ENCODE measurements at regions of chr3 and their contacts with region 1.

Region 1: GRCh38 chr3:39288300-39288808 is 8.5 kb upstream of the CX3CR1 start:
- DNase-seq: peak; percentile 78
- ATAC-seq: peak; percentile 96
- H3K4me3 ChIP-seq: no peak overlapping the region
- H3K27ac ChIP-seq: no peak overlapping the region
- H3K4me1 ChIP-seq: peaks cover 0 to 7% of the 10 kb centered on the region in 2 experiments; a peak in 1 of 4 replicates
- H3K27me3 ChIP-seq: no peaks in the 10 kb centered on the region
- CTCF ChIP-seq: peak; percentile 94 to 99 (median 96)
- POLR2A ChIP-seq: no peak
- RAD21 ChIP-seq: peak; percentile 100

Region 2: DNA sequence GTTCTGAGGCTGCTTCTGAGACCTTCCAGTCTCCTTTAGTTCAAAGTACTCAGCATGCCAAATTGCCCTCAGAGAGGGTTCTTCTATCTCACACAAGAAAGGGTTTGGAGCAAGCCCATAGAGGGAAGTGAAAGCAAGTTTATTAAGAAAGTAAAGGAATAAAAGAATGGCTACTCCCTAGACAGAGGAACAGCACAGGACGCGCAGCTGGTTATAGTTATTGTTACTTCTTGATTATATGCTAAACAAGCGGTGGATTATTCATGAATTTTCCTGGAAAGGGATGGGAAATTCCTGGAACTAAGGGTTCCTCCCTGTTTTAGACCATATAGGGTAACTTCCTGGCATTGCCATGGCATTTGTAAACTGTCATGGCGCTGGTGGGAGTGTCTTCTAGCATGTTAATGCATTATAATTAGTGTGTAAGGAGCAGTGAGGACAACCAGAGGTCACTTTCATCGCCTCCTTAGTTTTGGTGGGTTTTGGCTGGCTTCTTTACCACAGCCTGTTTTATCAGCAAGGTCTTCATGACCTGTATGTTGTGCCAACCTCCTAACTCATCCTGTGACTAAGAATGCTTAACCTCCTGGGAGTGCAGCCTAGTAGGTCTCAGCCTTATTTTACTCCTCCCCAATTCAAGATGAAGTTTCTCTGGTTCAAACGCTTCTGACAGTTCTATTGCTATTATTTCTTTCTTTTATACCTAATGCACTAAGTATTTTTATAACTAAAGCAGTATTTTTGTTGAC is 263.0 kb before region 1 on chr3:
- CTCF ChIA-PET with region 1: interaction called, 13 read pairs
- POLR2A ChIA-PET with region 1: no interaction called
- RAD21 ChIA-PET with region 1: no interaction called
- intact Hi-C with region 1: loop called (anchors 2 kb)
- DNase-seq: no peak
- ATAC-seq: no peak
- H3K4me3 ChIP-seq: no peak overlapping the region
- H3K27ac ChIP-seq: no peak overlapping the region
- H3K4me1 ChIP-seq: no peaks in the 10 kb centered on the region
- H3K27me3 ChIP-seq: peaks cover 6% of the 10 kb centered on the region
- CTCF ChIP-seq: no peak
- POLR2A ChIP-seq: no peak
- RAD21 ChIP-seq: no peak

Region 3: DNA sequence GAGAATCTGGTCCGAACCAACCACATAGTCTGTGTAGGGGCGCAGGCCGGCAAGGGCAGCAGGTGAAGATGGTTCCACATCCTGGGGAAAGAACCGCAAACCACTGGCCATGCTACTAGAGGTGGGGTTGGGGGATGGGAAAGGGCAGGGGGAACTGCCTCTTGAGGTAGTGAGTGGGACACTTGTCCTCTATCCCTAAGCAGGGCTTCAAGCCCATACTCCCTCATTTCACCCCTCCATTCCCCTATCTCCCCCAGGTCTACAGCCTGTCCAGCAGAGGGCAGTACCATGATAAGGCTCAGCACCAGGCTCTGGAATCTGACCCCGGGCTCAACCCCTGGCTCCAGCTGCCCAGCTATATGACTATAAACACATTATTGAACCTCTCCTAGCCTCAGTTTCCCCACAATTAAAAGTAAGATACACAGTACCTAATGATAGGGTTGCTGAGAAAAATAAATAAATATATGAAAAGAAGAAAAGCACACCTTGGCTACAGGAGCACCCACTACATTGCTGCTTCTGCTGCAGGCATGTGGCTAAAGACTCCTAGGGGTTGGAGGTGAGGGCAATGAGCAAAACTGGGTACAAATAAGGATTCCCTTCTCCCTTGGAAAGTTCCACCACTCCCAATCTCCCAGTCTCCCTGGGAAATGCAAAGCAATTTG is 187.2 kb before region 1 on chr3:
- CTCF ChIA-PET with region 1: interaction called, 23 read pairs
- POLR2A ChIA-PET with region 1: no interaction called
- RAD21 ChIA-PET with region 1: interaction called in 1 of 2 experiments, 5 read pairs
- intact Hi-C with region 1: loop called (anchors 1 kb)
- DNase-seq: no peak
- ATAC-seq: peak; percentile 87
- H3K4me3 ChIP-seq: no peak overlapping the region
- H3K27ac ChIP-seq: no peak overlapping the region
- H3K4me1 ChIP-seq: peaks cover 7 to 8% of the 10 kb centered on the region in 2 experiments
- H3K27me3 ChIP-seq: no peaks in the 10 kb centered on the region
- CTCF ChIP-seq: peak; percentile 69 to 88 (median 81); a peak in 5 of 6 replicates
- POLR2A ChIP-seq: no peak
- RAD21 ChIP-seq: peak; percentile 80

Region 4: DNA sequence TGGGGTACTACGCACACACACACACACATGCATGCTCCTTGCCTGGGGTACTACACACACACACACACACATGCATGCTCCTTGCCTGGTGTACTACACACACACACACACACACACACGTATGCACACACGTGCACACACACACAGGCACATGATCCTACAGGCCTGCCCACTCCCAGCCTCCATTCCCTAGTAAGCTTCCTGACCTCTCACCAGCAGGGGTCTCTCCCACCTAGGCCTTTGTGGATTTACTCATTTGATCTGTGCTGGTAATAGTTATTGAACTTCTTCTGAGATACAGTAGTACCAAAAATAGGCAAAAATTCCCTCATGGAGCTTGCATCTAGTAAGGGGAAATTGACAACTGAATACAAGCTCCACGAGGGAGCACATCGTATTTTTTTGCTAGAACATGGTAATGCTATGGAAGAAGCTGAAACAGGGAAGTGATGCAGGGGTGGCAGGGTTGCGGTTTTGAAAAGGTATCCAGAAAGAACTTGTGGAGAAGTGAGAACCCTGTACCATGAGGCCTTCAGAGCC is 161.8 kb before region 1 on chr3:
- CTCF ChIA-PET with region 1: interaction called, 184 read pairs
- POLR2A ChIA-PET with region 1: interaction called, 3 read pairs
- RAD21 ChIA-PET with region 1: interaction called, 21 to 30 read pairs
- intact Hi-C with region 1: loop called (anchors 1 kb)
- DNase-seq: no peak
- ATAC-seq: peak; percentile 77
- H3K4me3 ChIP-seq: no peak overlapping the region
- H3K27ac ChIP-seq: peak overlapping the region; percentile 39; the same call in 1 of the 2 replicates
- H3K4me1 ChIP-seq: peaks cover 24 to 27% of the 10 kb centered on the region in 2 experiments
- H3K27me3 ChIP-seq: no peaks in the 10 kb centered on the region
- CTCF ChIP-seq: peak; percentile 66 to 89 (median 72); a peak in 5 of 6 replicates
- POLR2A ChIP-seq: no peak
- RAD21 ChIP-seq: peak; percentile 97

Region 5: DNA sequence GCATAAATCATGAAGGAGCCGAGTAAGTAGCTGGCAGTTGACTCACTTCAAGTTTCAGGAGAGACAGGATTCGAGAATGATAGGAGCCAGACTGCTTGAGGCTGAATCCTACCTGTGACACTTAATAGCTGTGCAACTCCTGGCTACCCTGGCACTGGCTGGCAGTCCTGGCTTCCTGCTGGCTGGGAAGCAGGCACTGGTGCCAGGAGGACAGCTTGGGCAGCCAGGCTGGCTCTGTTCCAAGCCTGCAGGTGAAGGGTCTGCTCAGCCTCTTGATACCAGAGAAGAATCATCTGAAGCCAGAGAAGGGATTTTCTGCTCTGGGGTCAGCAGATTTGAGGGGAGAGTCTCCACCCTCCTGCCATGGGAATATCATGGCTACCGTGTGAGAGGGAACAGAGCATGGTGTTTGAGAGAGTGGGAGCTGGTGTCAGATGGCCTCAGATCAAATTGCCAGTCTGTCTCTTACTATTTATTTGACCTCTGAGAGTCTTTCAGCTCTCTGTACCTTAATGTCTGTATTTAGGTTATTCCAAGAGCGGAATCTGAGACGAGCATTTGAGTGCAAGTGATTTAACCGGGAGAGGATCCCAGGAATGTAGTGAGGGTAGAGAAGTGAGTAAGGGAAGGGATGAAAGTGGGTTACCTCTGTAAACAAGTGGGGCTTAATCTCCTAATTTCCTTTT is 91.5 kb before region 1 on chr3:
- CTCF ChIA-PET with region 1: interaction called, 112 read pairs
- POLR2A ChIA-PET with region 1: no interaction called
- RAD21 ChIA-PET with region 1: interaction called, 8 to 21 read pairs
- intact Hi-C with region 1: no loop called
- DNase-seq: no peak
- ATAC-seq: no peak
- H3K4me3 ChIP-seq: no peak overlapping the region
- H3K27ac ChIP-seq: no peak overlapping the region
- H3K4me1 ChIP-seq: peaks cover 2 to 18% of the 10 kb centered on the region in 2 experiments; a peak in 3 of 4 replicates
- H3K27me3 ChIP-seq: peaks cover 2% of the 10 kb centered on the region; the same call in 1 of the 2 replicates
- CTCF ChIP-seq: no peak
- POLR2A ChIP-seq: no peak
- RAD21 ChIP-seq: no peak

Region 6: DNA sequence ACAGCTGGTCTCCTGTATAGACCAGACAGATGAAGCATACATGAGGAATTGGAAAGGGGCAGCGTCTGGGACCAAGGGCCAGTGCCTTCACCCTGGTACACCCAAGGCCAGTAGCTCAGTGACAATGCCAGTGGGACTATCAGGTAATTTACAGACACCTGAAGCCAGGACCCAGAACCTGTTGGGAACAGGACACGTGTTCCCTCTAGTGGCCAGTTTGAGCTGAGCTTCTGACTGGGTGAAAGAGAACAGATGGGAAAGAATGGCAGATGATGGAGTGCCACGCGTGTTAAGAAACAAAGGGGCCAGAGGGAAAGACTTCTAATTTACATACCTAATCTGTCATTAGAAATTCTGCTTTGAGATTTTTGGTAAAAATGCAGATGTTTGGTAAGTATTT is 89.7 kb after region 1 on chr3:
- CTCF ChIA-PET with region 1: interaction called, 19 read pairs
- POLR2A ChIA-PET with region 1: no interaction called
- RAD21 ChIA-PET with region 1: interaction called in 1 of 2 experiments, 3 read pairs
- intact Hi-C with region 1: loop called (anchors 2 kb)
- DNase-seq: peak; percentile 45
- ATAC-seq: peak; percentile 90
- H3K4me3 ChIP-seq: no peak overlapping the region
- H3K27ac ChIP-seq: no peak overlapping the region
- H3K4me1 ChIP-seq: peaks cover 4 to 8% of the 10 kb centered on the region in 2 experiments; a peak in 3 of 4 replicates
- H3K27me3 ChIP-seq: peaks cover 21% of the 10 kb centered on the region; the same call in 1 of the 2 replicates
- CTCF ChIP-seq: peak; percentile 54 to 89 (median 86)
- POLR2A ChIP-seq: no peak
- RAD21 ChIP-seq: peak; percentile 73

Region 7: DNA sequence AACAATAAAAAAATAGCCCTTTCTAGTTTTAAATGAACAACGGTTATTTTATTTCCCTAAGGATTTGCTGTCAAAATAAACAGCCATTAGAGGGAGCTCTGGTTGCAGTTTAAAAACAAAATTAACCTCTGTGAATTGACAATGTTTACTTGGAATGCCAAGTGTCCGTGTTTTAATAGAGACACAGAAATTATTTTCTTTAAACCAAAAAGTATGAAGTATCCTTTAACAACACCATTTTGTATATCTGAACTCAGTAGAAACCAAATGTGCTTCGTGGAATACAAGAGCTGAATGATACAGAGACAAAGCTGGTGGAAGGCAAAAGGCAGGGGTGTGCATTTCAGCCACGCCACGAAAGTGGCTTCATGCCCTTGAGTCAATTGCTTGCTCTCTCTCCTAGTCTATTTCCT is 253.6 kb after region 1 on chr3:
- CTCF ChIA-PET with region 1: no interaction called
- POLR2A ChIA-PET with region 1: no interaction called
- RAD21 ChIA-PET with region 1: no interaction called
- intact Hi-C with region 1: no loop called
- DNase-seq: peak; percentile 13
- ATAC-seq: peak; percentile 66
- H3K4me3 ChIP-seq: no peak overlapping the region
- H3K27ac ChIP-seq: no peak overlapping the region
- H3K4me1 ChIP-seq: no peaks in the 10 kb centered on the region
- H3K27me3 ChIP-seq: no peaks in the 10 kb centered on the region
- CTCF ChIP-seq: peak; percentile 55 to 71 (median 62); a peak in 4 of 6 replicates
- POLR2A ChIP-seq: no peak
- RAD21 ChIP-seq: peak; percentile 78

Measured in HCT116 (cell line).